ENCODE measurements at regions of chr4 and their contacts with region 1.

Region 1: DNA sequence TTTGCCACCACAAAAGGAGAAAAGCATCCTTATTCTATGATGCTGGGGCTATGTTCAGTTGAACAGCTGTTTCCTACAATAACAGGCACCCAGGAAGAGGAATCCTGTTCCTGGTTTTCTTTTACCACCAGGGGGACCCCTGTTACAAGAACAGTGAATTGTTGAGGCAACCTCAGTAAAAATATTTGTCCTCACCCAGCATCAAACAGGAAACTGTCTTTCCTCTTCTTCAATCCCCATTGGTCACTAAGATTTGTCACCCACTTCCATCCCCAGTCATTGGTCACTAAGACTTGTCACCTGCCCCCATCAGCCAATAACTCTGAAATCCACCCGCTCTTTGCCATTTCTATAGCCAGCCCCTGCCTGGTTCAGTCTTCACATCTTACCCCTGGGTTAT is 143.5 kb upstream of the GALNT7 start:
- DNase-seq: peak; percentile 55
- ATAC-seq: peak; percentile 88
- H3K4me3 Mint-ChIP-seq: no peak overlapping the region
- H3K27ac Mint-ChIP-seq: no peak overlapping the region
- H3K4me1 Mint-ChIP-seq: peaks cover 47% of the 10 kb centered on the region
- H3K27me3 Mint-ChIP-seq: no peaks in the 10 kb centered on the region
- CTCF ChIP-seq: peak; percentile 67

Region 2: DNA sequence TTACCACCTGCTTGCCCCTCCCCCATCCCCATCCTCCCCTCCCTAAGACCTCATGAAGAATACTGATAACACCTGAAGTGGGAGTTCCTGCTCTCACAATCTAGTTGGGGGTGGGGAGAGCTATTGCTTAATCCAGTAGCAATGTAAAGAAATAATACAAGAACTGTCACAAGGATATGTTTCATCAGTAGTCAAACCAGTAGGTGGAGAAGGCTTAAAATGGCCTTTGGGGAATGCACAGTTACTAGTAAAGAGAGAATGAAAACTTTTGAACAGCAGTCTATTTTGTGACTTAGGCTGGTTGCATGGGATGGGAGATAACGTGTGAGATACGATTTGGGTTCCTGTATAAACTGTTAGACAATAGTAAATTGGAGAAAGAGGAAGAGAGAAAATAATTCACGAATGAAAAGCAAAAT is 149.5 kb after region 1 on chr4:
- CTCF ChIA-PET with region 1: interaction called, 12 read pairs
- POLR2A ChIA-PET with region 1: no interaction called
- DNase-seq: no peak
- ATAC-seq: no peak
- H3K4me3 Mint-ChIP-seq: no peak overlapping the region
- H3K27ac Mint-ChIP-seq: peak overlapping the region; percentile 21; the same call in 1 of the 2 replicates
- H3K4me1 Mint-ChIP-seq: peaks cover 81% of the 10 kb centered on the region
- H3K27me3 Mint-ChIP-seq: no peaks in the 10 kb centered on the region
- CTCF ChIP-seq: no peak